ENCODE measurements at regions of chr16 and their contacts with region 1.

Region 1: GRCh38 chr16:7209598-7209997 is 123.0 kb upstream of the RBFOX1 start:
- DNase-seq: no peak

Region 2: GRCh38 chr16:5580296-5580695 is 1629.3 kb before region 1 on chr16:
- intact Hi-C with region 1: loop called in 1 of 2 experiments (anchors 10 kb)
- DNase-seq: no peak

Region 3: GRCh38 chr16:7026639-7027038 is 183.0 kb before region 1 on chr16:
- intact Hi-C with region 1: no loop called
- DNase-seq: no peak

Region 4: GRCh38 chr16:7257016-7257415 is 47.4 kb after region 1 on chr16:
- intact Hi-C with region 1: no loop called
- DNase-seq: no peak